Ovary (tissue), 10 donors: ENCODE measurements at regions of chr17 and their contacts with region 1.

Region 1: DNA sequence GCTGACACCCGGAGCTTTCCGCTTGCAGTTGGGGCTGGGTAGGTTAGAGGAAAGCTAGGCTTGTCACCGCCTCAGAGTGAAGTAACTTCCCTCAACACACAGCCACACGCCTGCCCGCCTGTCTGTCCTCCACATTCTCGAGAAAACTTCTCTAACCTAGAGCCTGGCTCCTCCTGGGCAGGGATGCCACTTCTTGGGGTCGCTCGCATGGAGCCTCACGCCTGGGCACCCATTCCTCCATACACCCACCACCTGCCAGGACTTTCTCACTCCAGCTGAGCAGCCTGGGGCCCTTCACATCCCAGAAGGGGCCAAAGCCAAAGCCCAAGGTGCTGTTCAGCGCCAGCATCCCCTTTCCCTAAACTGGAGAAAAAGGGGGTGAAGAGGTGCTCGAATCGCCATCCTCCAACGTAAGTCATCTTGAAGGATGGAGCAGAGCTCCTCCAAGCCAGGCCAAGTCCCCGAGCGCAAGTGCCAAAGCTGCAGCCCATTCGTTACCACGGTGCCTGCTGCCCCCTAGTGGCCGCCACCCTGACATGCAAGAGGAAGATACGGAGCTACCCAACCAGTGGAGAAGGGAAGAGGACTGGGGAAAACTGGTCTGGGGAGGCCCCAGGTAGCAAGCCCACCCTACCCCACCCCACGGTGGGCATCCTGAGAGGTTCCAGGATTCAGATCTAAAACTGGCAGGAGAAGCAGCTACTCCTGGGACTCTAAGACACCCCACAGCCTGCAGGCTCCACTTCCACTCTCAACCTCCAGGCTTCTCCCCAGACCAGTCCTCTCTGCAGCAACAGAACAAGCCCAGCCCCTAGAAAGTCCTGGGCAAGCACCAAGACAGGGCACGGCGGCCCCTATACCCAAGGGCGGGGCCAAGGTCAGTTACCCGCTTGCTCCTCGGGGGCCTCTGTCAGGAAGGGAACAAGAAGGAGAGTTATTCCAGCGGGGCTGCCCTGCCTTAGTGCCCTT is 63.1 kb downstream of the MYO18A start:
- DNase-seq: peak in 4 of 5 donors; percentile 64 to 73 (median 66)
- H3K4me3 ChIP-seq: no peak overlapping the region
- H3K27ac ChIP-seq: no peak overlapping the region
- H3K4me1 ChIP-seq: no peaks in the 10 kb centered on the region
- H3K27me3 ChIP-seq: no peaks in the 10 kb centered on the region
- CTCF ChIP-seq: peak; percentile 43 to 61 (median 58)
- EP300 ChIP-seq: no peak
- POLR2A ChIP-seq: no peak

Region 2: GRCh38 chr17:28982131-28982951 is 134.7 kb before region 1 on chr17:
- intact Hi-C with region 1: loop called in 1 of 4 experiments (anchors 5 kb)
- DNase-seq: no peak
- H3K4me3 ChIP-seq: no peak overlapping the region
- H3K27ac ChIP-seq: no peak overlapping the region
- H3K4me1 ChIP-seq: no peaks in the 10 kb centered on the region
- H3K27me3 ChIP-seq: no peaks in the 10 kb centered on the region
- CTCF ChIP-seq: no peak
- EP300 ChIP-seq: no peak
- POLR2A ChIP-seq: no peak